ENCODE measurements at regions of chr1 and their contacts with region 1.

Region 1: GRCh38 chr1:207702317-207702716 is 49.5 kb upstream of the CD46 start:
- DNase-seq: no peak
- H3K4me3 ChIP-seq: no peak overlapping the region
- H3K27ac ChIP-seq: no peak overlapping the region
- H3K4me1 ChIP-seq: no peaks in the 10 kb centered on the region
- H3K27me3 ChIP-seq: no peaks in the 10 kb centered on the region
- CTCF ChIP-seq: no peak
- EP300 ChIP-seq: no peak
- POLR2A ChIP-seq: no peak

Region 2: GRCh38 chr1:207115269-207115668 is 587.0 kb before region 1 on chr1:
- in situ Hi-C with region 1: no loop called
- intact Hi-C with region 1: no loop called
- DNase-seq: no peak
- H3K4me3 ChIP-seq: no peak overlapping the region
- H3K27ac ChIP-seq: no peak overlapping the region
- H3K4me1 ChIP-seq: no peaks in the 10 kb centered on the region
- H3K27me3 ChIP-seq: no peaks in the 10 kb centered on the region
- CTCF ChIP-seq: no peak
- EP300 ChIP-seq: no peak
- POLR2A ChIP-seq: no peak

Region 3: GRCh38 chr1:207797229-207797961 is 95.1 kb after region 1 on chr1:
- in situ Hi-C with region 1: loop called in 1 of 4 experiments (anchors 10 kb)
- intact Hi-C with region 1: no loop called
- DNase-seq: peak; percentile 90
- H3K4me3 ChIP-seq: no peak overlapping the region
- H3K27ac ChIP-seq: peak overlapping the region in 2 of 4 donors; percentile 24 to 34
- H3K4me1 ChIP-seq: peaks cover 0 to 25% (median 7%) of the 10 kb centered on the region in 4 donors
- H3K27me3 ChIP-seq: no peaks in the 10 kb centered on the region
- CTCF ChIP-seq: peak; percentile 77 to 82 (median 80)
- EP300 ChIP-seq: no peak
- POLR2A ChIP-seq: no peak

Region 4: GRCh38 chr1:207848234-207848633 is 145.9 kb after region 1 on chr1:
- in situ Hi-C with region 1: no loop called
- intact Hi-C with region 1: no loop called
- DNase-seq: peak; percentile 86
- H3K4me3 ChIP-seq: no peak overlapping the region
- H3K27ac ChIP-seq: peak overlapping the region; percentile 76 to 82 (median 79)
- H3K4me1 ChIP-seq: peaks cover 18 to 68% (median 42%) of the 10 kb centered on the region in 4 donors
- H3K27me3 ChIP-seq: no peaks in the 10 kb centered on the region
- CTCF ChIP-seq: no peak
- EP300 ChIP-seq: no peak
- POLR2A ChIP-seq: no peak

Measured in transverse colon (tissue), 4 donors.